Caco-2 (cell line): ENCODE measurements at regions of chr17 and their contacts with region 1.

Region 1: GRCh38 chr17:6567529-6568183 is 11.3 kb upstream of the PITPNM3 start:
- DNase-seq: no peak
- H3K4me3 ChIP-seq: no peak overlapping the region
- H3K4me3 Mint-ChIP-seq: no peak overlapping the region
- H3K27ac Mint-ChIP-seq: no peak overlapping the region
- H3K4me1 ChIP-seq: no peaks in the 10 kb centered on the region
- H3K4me1 Mint-ChIP-seq: no peaks in the 10 kb centered on the region
- H3K27me3 ChIP-seq: no peaks in the 10 kb centered on the region
- H3K27me3 Mint-ChIP-seq: no peaks in the 10 kb centered on the region
- CTCF ChIP-seq: no peak

Region 2: GRCh38 chr17:6473128-6473767 is 94.4 kb before region 1 on chr17:
- CTCF ChIA-PET with region 1: no interaction called
- POLR2A ChIA-PET with region 1: no interaction called
- intact Hi-C with region 1: loop called (anchors 10 kb)
- DNase-seq: peak; percentile 68 to 70
- H3K4me3 ChIP-seq: no peak overlapping the region
- H3K4me3 Mint-ChIP-seq: no peak overlapping the region
- H3K27ac Mint-ChIP-seq: peak overlapping the region; percentile 17
- H3K4me1 ChIP-seq: no peaks in the 10 kb centered on the region
- H3K4me1 Mint-ChIP-seq: peaks cover 6% of the 10 kb centered on the region
- H3K27me3 ChIP-seq: no peaks in the 10 kb centered on the region
- H3K27me3 Mint-ChIP-seq: peaks cover 3% of the 10 kb centered on the region
- CTCF ChIP-seq: peak; percentile 74 to 78